Right cardiac atrium (tissue), 5 donors: ENCODE measurements at regions of chrX and their contacts with region 1.

Region 1: DNA sequence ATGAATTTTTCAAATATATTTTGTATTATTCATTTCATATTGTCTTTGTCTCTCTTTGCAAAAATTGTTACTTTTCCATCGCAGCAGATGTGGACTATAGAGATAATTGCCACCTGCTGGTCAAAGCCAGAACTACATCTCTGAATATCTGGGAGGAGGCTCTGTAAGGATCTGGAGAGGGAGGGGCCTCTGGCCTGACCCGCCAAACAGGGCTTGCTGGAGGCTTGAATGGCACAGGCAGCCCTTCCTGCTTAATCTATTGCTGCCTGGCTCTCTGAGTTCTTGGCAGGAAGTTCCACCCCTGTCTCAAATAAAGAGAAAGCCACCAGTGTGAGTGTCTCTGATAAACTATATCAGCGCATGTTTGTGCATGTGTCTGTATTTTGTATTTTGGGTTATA is 132.4 kb downstream of the ZMAT1 start:
- DNase-seq: peak; percentile 81 to 90 (median 90)
- ATAC-seq: peak; percentile 99 to 100
- H3K4me3 ChIP-seq: peak overlapping the region; percentile 36
- H3K27ac ChIP-seq: no peak overlapping the region
- H3K4me1 ChIP-seq: no peaks in the 10 kb centered on the region
- H3K27me3 ChIP-seq: no peaks in the 10 kb centered on the region

Region 2: GRCh38 chrX:101415180-101416145 is 383.9 kb before region 1 on chrX:
- intact Hi-C with region 1: loop called in 1 of 4 experiments (anchors 10 kb)
- DNase-seq: peak in 1 of 3 donors; percentile 53
- ATAC-seq: peak; percentile 34 to 52
- H3K4me3 ChIP-seq: no peak overlapping the region
- H3K27ac ChIP-seq: no peak overlapping the region
- H3K4me1 ChIP-seq: no peaks in the 10 kb centered on the region
- H3K27me3 ChIP-seq: no peaks in the 10 kb centered on the region

Region 3: GRCh38 chrX:101595739-101596419 is 203.5 kb before region 1 on chrX:
- intact Hi-C with region 1: loop called in 3 of 4 experiments (anchors 5 to 10 kb)
- DNase-seq: no peak
- ATAC-seq: peak; percentile 55 to 81
- H3K4me3 ChIP-seq: no peak overlapping the region
- H3K27ac ChIP-seq: no peak overlapping the region
- H3K4me1 ChIP-seq: no peaks in the 10 kb centered on the region
- H3K27me3 ChIP-seq: no peaks in the 10 kb centered on the region